Activated naive CD4-positive, alpha-beta T cell treated with anti-CD3 and anti-CD28 coated beads, Interleukin-2, amount 10 ng/mL, durations not matched to agents 7 days and 5 days (primary cell): ENCODE measurements at regions of chr17 and their contacts with region 1.

Region 1: GRCh38 chr17:77054936-77055335 is 85.8 kb upstream of the SEC14L1 start:
- DNase-seq: no peak
- H3K4me3 Mint-ChIP-seq: no peak overlapping the region
- H3K27ac Mint-ChIP-seq: no peak overlapping the region
- H3K4me1 Mint-ChIP-seq: no peaks in the 10 kb centered on the region
- H3K27me3 Mint-ChIP-seq: peaks cover 50% of the 10 kb centered on the region

Region 2: GRCh38 chr17:77011173-77012011 is 43.5 kb before region 1 on chr17:
- CTCF ChIA-PET with region 1: interaction called, 31 read pairs
- DNase-seq: peak; percentile 72
- H3K4me3 Mint-ChIP-seq: no peak overlapping the region
- H3K27ac Mint-ChIP-seq: no peak overlapping the region
- H3K4me1 Mint-ChIP-seq: no peaks in the 10 kb centered on the region
- H3K27me3 Mint-ChIP-seq: peaks cover 53% of the 10 kb centered on the region

Region 3: DNA sequence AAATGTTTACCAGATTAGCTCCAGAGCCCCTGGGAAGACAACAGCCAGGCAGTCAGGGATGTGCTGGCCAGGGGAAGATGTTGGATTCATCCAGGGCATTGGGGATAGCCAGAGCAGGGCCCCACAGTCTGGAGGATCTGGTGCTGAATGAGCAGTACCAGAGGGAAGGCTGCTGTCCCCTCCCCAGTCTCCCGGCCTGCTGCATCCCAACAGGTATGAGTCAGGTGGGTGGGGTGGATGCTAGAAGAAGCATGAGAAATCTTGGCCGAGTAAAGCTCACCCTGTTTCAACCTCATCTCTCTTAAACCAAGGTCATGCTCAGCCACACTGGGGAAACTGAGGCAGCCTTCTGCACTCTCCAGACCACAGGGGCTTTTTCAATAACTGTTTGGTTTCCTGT is 14.0 kb after region 1 on chr17:
- CTCF ChIA-PET with region 1: interaction called, 28 read pairs
- DNase-seq: no peak
- H3K4me3 Mint-ChIP-seq: no peak overlapping the region
- H3K27ac Mint-ChIP-seq: no peak overlapping the region
- H3K4me1 Mint-ChIP-seq: no peaks in the 10 kb centered on the region
- H3K27me3 Mint-ChIP-seq: peaks cover 65% of the 10 kb centered on the region

Region 4: GRCh38 chr17:77098884-77099545 is 44.1 kb after region 1 on chr17:
- CTCF ChIA-PET with region 1: no interaction called
- DNase-seq: no peak
- H3K4me3 Mint-ChIP-seq: no peak overlapping the region
- H3K27ac Mint-ChIP-seq: peak overlapping the region; percentile 11
- H3K4me1 Mint-ChIP-seq: peaks cover 30% of the 10 kb centered on the region
- H3K27me3 Mint-ChIP-seq: no peaks in the 10 kb centered on the region